Activated CD8-positive, alpha-beta T cell treated with anti-CD3 and anti-CD28 coated beads, Interleukin-2, amount 10 ng/mL, durations not matched to agents 7 days and 5 days (primary cell): ENCODE measurements at regions of chr2 and their contacts with region 1.

Region 1: GRCh38 chr2:27071277-27071989 is at the start of gene OST4:
- DNase-seq: peak; percentile 92
- ATAC-seq: peak; percentile 94
- H3K4me3 Mint-ChIP-seq: peak within 1 kb of the TSS; percentile 99
- H3K27ac Mint-ChIP-seq: peak within 1 kb of the TSS; percentile 95
- H3K4me1 Mint-ChIP-seq: peaks cover 79% of the 10 kb centered on the region
- H3K27me3 Mint-ChIP-seq: no peaks in the 10 kb centered on the region
- total RNA-seq, gene OST4: 334 to 346 TPM

Region 2: GRCh38 chr2:27003857-27004256 is 67.6 kb before region 1 on chr2:
- CTCF ChIA-PET with region 1: no interaction called
- POLR2A ChIA-PET with region 1: no interaction called
- DNase-seq: no peak
- ATAC-seq: no peak
- H3K4me3 Mint-ChIP-seq: no peak overlapping the region
- H3K27ac Mint-ChIP-seq: no peak overlapping the region
- H3K4me1 Mint-ChIP-seq: no peaks in the 10 kb centered on the region
- H3K27me3 Mint-ChIP-seq: peaks cover 22% of the 10 kb centered on the region

Region 3: GRCh38 chr2:27050281-27050995 is 21.0 kb before region 1 on chr2:
- CTCF ChIA-PET with region 1: interaction called, 21 read pairs
- POLR2A ChIA-PET with region 1: interaction called, 128 read pairs
- DNase-seq: peak; percentile 95
- ATAC-seq: peak; percentile 71
- H3K4me3 Mint-ChIP-seq: peak overlapping the region; percentile 93
- H3K27ac Mint-ChIP-seq: peak overlapping the region; percentile 96
- H3K4me1 Mint-ChIP-seq: peaks cover 20% of the 10 kb centered on the region
- H3K27me3 Mint-ChIP-seq: peaks cover 5% of the 10 kb centered on the region

Region 4: GRCh38 chr2:27059141-27059820 is 12.2 kb before region 1 on chr2:
- CTCF ChIA-PET with region 1: interaction called, 8 read pairs
- POLR2A ChIA-PET with region 1: interaction called, 128 read pairs
- DNase-seq: no peak
- ATAC-seq: no peak
- H3K4me3 Mint-ChIP-seq: no peak overlapping the region
- H3K27ac Mint-ChIP-seq: no peak overlapping the region
- H3K4me1 Mint-ChIP-seq: no peaks in the 10 kb centered on the region
- H3K27me3 Mint-ChIP-seq: no peaks in the 10 kb centered on the region

Region 5: GRCh38 chr2:27086090-27086723 is 14.8 kb after region 1 on chr2:
- CTCF ChIA-PET with region 1: interaction called, 28 read pairs
- POLR2A ChIA-PET with region 1: interaction called, 34 read pairs
- DNase-seq: peak; percentile 97
- ATAC-seq: peak; percentile 90
- H3K4me3 Mint-ChIP-seq: peak overlapping the region; percentile 80
- H3K27ac Mint-ChIP-seq: peak overlapping the region; percentile 88
- H3K4me1 Mint-ChIP-seq: peaks cover 59% of the 10 kb centered on the region
- H3K27me3 Mint-ChIP-seq: no peaks in the 10 kb centered on the region